ENCODE measurements at regions of chr1 and their contacts with region 1.

Region 1: GRCh38 chr1:27031235-27032118 is 18.8 kb upstream of the TENT5B start:
- DNase-seq: peak; percentile 93 to 96
- ATAC-seq: peak; percentile 86
- H3K4me3 ChIP-seq: no peak overlapping the region
- H3K27ac ChIP-seq: peak overlapping the region in 1 of 2 donors; percentile 49
- H3K4me1 ChIP-seq: peaks cover 3 to 7% of the 10 kb centered on the region in 2 donors
- H3K27me3 ChIP-seq: no peaks in the 10 kb centered on the region

Region 2: DNA sequence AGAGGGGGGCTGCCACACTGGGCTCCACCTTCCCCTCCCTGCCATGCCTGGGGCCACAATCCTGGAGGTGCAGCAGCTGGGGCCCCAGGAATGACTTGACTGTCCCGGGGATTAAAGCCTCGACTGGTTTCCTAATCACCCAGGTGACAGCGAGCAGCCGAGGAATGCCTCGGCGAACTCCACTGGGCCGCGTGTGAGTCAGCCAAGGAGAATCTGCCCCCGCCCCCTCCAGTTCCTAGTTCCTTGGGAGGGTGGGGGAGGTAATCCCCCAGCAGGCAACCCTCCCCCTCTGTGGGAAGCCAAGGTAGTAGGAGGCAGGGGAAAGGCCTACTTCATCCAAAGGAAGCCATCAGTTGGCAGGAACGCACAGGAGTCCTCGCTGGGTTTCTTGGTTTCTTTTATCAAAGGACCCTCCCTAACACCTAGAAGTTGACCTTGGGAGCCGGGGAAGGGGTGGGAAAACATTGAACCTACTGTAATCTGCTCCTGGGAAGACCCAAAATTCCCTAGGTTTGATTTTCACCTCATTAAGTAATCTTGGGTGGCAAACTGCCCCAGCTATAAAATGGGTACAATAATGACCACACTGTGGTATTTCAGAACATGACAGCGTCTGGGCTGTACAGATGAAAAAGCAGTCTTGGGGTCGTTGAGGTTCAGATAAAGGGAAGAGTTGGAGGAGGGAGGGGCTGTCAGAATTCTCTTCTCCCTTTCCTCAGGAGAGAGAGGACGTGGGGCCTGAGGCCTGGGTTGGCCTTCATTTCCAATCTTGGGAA is 20.3 kb before region 1 on chr1:
- intact Hi-C with region 1: loop called in 1 of 2 experiments (anchors 2 kb)
- DNase-seq: peak; percentile 79 to 93
- ATAC-seq: no peak
- H3K4me3 ChIP-seq: peak overlapping the region; percentile 85 to 88
- H3K27ac ChIP-seq: peak overlapping the region; percentile 52 to 85
- H3K4me1 ChIP-seq: no peaks in the 10 kb centered on the region
- H3K27me3 ChIP-seq: no peaks in the 10 kb centered on the region

Measured in aorta (tissue), 5 donors.